ENCODE measurements at regions of chr2 and their contacts with region 1.

Region 1: GRCh38 chr2:223970343-223971128 is 13.3 kb downstream of the MRPL44 start:
- DNase-seq: peak; percentile 85
- ATAC-seq: peak; percentile 68
- H3K4me3 ChIP-seq: no peak overlapping the region
- H3K27ac ChIP-seq: no peak overlapping the region
- H3K4me1 ChIP-seq: peaks cover 15% of the 10 kb centered on the region
- H3K27me3 ChIP-seq: no peaks in the 10 kb centered on the region
- CTCF ChIP-seq: peak; percentile 94

Region 2: DNA sequence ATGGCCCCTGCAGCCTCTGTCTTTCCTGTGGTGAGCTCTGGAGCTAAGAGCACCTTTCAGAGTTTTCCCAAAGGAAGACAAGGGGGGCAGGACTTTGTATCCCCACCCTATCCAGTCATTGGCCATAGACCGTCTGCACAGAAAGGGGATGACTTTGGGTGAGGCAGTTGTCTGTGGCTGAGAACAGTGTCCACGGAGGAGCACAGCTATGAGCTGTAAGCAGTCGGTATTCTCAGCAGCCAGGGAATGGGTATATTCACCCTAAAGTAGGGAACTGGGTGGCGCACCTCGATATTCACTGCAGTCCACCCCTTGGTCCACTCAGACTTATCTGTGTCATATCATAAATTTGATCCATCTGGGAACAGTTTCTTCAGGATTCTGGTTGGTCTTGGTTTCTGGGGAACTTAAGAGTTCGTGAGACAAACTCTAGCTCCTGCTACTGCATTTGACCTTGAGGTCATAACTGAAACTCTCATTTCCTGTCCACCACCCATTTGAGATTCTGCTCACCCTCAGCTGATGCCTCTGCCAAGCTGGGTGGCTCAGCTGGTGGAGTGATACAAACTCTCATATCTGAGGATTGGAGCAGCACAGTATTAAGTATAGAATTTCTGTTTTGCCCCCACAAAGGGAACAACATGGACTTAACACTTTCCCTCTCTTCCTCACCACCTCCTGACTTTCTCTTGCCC is 323.1 kb before region 1 on chr2:
- CTCF ChIA-PET with region 1: no interaction called
- POLR2A ChIA-PET with region 1: no interaction called
- intact Hi-C with region 1: no loop called
- DNase-seq: no peak
- ATAC-seq: no peak
- H3K4me3 ChIP-seq: no peak overlapping the region
- H3K27ac ChIP-seq: no peak overlapping the region
- H3K4me1 ChIP-seq: no peaks in the 10 kb centered on the region
- H3K27me3 ChIP-seq: no peaks in the 10 kb centered on the region
- CTCF ChIP-seq: no peak

Region 3: GRCh38 chr2:223837287-223838061 is 133.1 kb before region 1 on chr2 and contains the start of gene AP1S3:
- CTCF ChIA-PET with region 1: no interaction called
- POLR2A ChIA-PET with region 1: no interaction called
- intact Hi-C with region 1: no loop called
- DNase-seq: peak; percentile 84
- ATAC-seq: peak; percentile 87
- H3K4me3 ChIP-seq: peak within 1 kb of the TSS; percentile 95
- H3K27ac ChIP-seq: peak within 1 kb of the TSS; percentile 71
- H3K4me1 ChIP-seq: peaks cover 27% of the 10 kb centered on the region; the same call in 1 of the 2 replicates
- H3K27me3 ChIP-seq: no peaks in the 10 kb centered on the region
- CTCF ChIP-seq: no peak
- total RNA-seq, gene AP1S3: 34.3 and 37.6 TPM in 2 replicates

Region 4: DNA sequence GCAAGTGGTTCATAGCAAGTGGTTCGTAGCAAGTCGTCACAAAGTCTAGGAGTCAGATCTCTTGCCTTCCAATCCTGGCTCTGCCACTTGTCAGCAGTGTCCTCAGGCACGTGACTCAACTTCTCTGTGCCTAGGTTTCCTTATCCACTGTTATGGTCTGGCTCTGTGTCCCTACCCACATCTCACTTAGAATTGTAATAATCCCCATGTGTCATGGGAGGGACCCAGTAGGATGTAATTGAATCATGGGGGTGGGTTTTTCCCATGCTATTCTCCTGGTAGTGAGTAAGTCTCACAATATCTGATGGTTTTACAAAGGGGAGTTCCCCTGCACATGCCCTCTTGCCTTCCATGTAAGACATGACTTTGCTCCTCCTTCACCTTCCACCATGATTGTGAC is 81.3 kb before region 1 on chr2:
- CTCF ChIA-PET with region 1: no interaction called
- POLR2A ChIA-PET with region 1: no interaction called
- intact Hi-C with region 1: no loop called
- DNase-seq: no peak
- ATAC-seq: no peak
- H3K4me3 ChIP-seq: no peak overlapping the region
- H3K27ac ChIP-seq: no peak overlapping the region
- H3K4me1 ChIP-seq: no peaks in the 10 kb centered on the region
- H3K27me3 ChIP-seq: no peaks in the 10 kb centered on the region
- CTCF ChIP-seq: no peak

Region 5: DNA sequence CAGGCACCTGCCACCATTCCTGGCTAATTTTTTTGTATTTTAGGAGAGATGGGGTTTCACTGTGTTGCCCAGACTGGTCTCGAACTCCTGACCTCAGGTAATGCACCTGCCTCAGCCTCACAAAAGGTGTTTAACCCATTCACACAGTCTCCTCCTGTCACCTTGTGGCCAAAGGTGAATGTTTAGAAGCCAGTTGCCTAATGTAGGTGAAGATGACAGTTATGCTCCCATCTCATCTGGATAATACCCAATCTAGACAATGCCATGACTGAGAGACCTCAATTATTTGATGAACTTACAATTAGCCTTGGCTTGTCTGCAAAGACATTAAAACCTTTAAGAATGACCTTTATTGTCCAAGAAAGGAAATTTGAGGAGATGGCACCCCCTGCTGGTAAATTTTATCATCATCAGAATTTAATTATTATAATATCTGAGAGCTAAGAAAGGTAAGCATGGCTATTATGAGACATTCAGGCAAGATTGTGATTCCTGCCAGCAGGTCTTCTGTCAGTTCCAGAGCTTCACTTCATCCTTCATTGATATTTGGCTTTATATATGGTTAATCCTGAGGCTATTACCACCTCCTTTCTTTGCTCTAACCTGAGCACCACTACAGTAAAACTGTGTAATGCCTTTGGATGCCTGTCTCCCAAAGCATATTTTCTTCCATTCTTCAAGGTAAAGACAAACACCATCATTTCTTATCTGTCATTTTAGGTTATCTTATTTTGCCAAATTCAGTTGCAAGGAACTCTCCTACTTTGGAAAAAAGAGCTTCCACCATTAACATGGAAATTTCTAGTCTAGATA is 313.8 kb after region 1 on chr2:
- CTCF ChIA-PET with region 1: interaction called, 19 read pairs
- POLR2A ChIA-PET with region 1: interaction called, 4 read pairs
- intact Hi-C with region 1: loop called (anchors 1 kb)
- DNase-seq: peak; percentile 73
- ATAC-seq: peak; percentile 77
- H3K4me3 ChIP-seq: no peak overlapping the region
- H3K27ac ChIP-seq: no peak overlapping the region
- H3K4me1 ChIP-seq: no peaks in the 10 kb centered on the region
- H3K27me3 ChIP-seq: no peaks in the 10 kb centered on the region
- CTCF ChIP-seq: peak; percentile 93; the same call in 1 of the 2 replicates

Region 6: GRCh38 chr2:224369028-224369632 is 398.6 kb after region 1 on chr2:
- CTCF ChIA-PET with region 1: no interaction called
- POLR2A ChIA-PET with region 1: no interaction called
- intact Hi-C with region 1: loop called (anchors 1 kb)
- DNase-seq: peak; percentile 77
- ATAC-seq: peak; percentile 45
- H3K4me3 ChIP-seq: no peak overlapping the region
- H3K27ac ChIP-seq: no peak overlapping the region
- H3K4me1 ChIP-seq: peaks cover 18% of the 10 kb centered on the region; the same call in 1 of the 2 replicates
- H3K27me3 ChIP-seq: no peaks in the 10 kb centered on the region
- CTCF ChIP-seq: peak; percentile 81

Region 7: DNA sequence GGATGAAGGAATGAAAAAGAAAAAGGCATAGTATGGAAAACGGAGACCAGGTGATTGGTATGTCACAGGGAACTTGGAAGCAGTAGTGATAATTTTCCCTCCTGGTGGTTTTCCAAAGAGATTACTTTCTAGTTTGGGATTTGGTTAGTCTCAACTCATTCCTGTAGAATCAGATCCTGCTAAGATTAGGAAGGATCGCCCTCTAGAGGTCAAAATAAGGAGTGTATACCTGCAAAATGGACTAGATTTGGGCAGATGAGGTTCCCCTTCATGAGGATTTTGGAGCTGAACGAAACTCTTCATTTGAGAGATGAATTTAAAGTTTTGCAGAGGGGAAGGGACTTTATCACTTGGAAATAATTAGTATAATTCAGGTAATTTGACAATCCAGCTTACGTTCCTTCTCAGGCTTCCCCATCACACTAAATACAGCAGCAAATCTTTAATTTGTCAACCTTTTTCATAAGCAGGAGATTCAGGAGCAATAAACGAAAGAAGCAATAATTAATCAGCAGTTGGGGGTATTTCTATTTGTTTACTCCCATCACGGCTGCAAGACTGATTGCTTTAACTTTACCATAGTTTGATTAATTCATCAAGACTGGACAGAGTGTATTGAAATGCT is 680.4 kb after region 1 on chr2:
- CTCF ChIA-PET with region 1: no interaction called
- POLR2A ChIA-PET with region 1: no interaction called
- intact Hi-C with region 1: loop called (anchors 5 kb)
- DNase-seq: peak; percentile 77
- ATAC-seq: peak; percentile 85
- H3K4me3 ChIP-seq: no peak overlapping the region
- H3K27ac ChIP-seq: no peak overlapping the region
- H3K4me1 ChIP-seq: no peaks in the 10 kb centered on the region
- H3K27me3 ChIP-seq: no peaks in the 10 kb centered on the region
- CTCF ChIP-seq: peak; percentile 85

Region 8: GRCh38 chr2:225041851-225042799 is 1071.6 kb after region 1 on chr2 and contains the start of gene DOCK10:
- CTCF ChIA-PET with region 1: interaction called, 13 read pairs
- POLR2A ChIA-PET with region 1: no interaction called
- intact Hi-C with region 1: no loop called
- DNase-seq: peak; percentile 35
- ATAC-seq: peak; percentile 39
- H3K4me3 ChIP-seq: peak within 1 kb of the TSS; percentile 86
- H3K27ac ChIP-seq: peak within 1 kb of the TSS; percentile 7
- H3K4me1 ChIP-seq: peaks cover 10% of the 10 kb centered on the region; the same call in 1 of the 2 replicates
- H3K27me3 ChIP-seq: no peaks in the 10 kb centered on the region
- CTCF ChIP-seq: no peak; the same call in 1 of the 2 replicates
- total RNA-seq, gene DOCK10: 23.1 and 38.5 TPM in 2 replicates